Activated CD8-positive, alpha-beta T cell treated with anti-CD3 and anti-CD28 coated beads for 36 hours (primary cell): ENCODE measurements at regions of chr19 and their contacts with region 1.

Region 1: DNA sequence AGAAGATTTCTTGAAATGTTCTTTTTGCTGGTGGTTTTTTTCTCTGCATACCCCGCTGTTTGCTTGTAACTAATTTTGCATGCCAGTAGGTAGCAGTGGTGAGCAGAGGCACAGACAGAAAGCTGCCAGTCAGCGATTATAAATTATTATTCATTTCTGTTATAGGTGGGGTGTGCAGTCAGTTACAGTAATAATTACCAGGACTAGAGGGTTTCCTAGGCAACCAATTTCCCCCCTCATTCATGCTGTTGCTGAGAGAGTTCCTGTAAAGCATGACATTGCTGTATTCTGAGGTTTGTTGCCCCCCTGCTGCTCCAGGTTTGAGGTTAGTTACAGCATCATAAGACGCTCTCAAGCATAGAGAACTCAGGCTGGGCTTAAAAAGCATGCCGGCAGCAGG is 104.5 kb downstream of the URI1 start:
- DNase-seq: peak; percentile 12
- ATAC-seq: peak; percentile 66
- H3K4me3 Mint-ChIP-seq: no peak overlapping the region
- H3K27ac Mint-ChIP-seq: no peak overlapping the region
- H3K4me1 Mint-ChIP-seq: peaks cover 13% of the 10 kb centered on the region
- H3K27me3 Mint-ChIP-seq: no peaks in the 10 kb centered on the region
- CTCF ChIP-seq: peak; percentile 40

Region 2: GRCh38 chr19:30036191-30037129 is 10.1 kb before region 1 on chr19:
- CTCF ChIA-PET with region 1: interaction called, 10 read pairs
- POLR2A ChIA-PET with region 1: no interaction called
- intact Hi-C with region 1: no loop called
- DNase-seq: no peak
- ATAC-seq: no peak
- H3K4me3 Mint-ChIP-seq: no peak overlapping the region
- H3K27ac Mint-ChIP-seq: no peak overlapping the region
- H3K4me1 Mint-ChIP-seq: no peaks in the 10 kb centered on the region
- H3K27me3 Mint-ChIP-seq: no peaks in the 10 kb centered on the region
- CTCF ChIP-seq: no peak

Region 3: DNA sequence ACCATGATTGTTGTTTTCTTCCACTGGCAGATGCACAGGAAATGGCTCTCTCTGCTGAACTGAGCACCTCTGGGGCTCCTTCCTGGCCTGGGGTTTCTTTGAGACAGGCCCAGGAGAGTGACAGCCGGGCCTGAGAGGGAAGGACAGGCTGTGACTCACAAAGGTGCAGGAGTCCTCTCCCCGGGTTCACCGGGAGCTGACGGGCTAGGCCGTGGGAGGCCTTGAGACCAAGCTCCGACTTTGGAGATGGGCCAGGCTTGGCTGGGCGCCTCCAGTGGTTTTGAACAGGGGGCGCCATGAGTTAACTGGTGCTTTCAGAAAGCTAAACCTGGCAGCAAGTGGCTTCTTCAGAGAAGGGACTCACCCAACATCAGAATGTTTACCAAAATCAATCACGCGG is 38.9 kb after region 1 on chr19:
- CTCF ChIA-PET with region 1: no interaction called
- POLR2A ChIA-PET with region 1: no interaction called
- intact Hi-C with region 1: no loop called
- DNase-seq: peak; percentile 20
- ATAC-seq: peak; percentile 51
- H3K4me3 Mint-ChIP-seq: no peak overlapping the region
- H3K27ac Mint-ChIP-seq: no peak overlapping the region
- H3K4me1 Mint-ChIP-seq: no peaks in the 10 kb centered on the region
- H3K27me3 Mint-ChIP-seq: no peaks in the 10 kb centered on the region
- CTCF ChIP-seq: no peak

Region 4: DNA sequence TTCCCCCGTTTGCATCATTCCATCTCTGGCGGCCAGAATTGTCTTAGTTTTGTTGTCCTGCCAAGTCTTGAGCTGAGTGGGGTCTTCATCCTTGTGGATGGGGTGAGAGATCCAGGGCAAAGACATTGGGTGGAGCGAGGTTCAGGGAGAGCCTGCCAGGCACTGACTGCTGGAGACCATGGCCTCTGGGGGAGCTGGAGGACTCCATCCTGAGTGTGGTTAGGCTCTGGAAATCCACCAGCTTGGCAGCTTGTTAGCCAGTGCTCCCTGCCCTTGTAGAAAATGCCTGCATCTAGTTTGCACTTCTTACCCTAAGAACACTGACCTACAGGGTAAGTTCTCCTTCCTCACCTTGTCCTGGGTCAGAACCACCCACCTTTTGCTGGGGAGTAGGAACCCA is 228.5 kb after region 1 on chr19:
- CTCF ChIA-PET with region 1: no interaction called
- POLR2A ChIA-PET with region 1: no interaction called
- intact Hi-C with region 1: no loop called
- DNase-seq: no peak
- ATAC-seq: no peak
- H3K4me3 Mint-ChIP-seq: no peak overlapping the region
- H3K27ac Mint-ChIP-seq: no peak overlapping the region
- H3K4me1 Mint-ChIP-seq: no peaks in the 10 kb centered on the region
- H3K27me3 Mint-ChIP-seq: no peaks in the 10 kb centered on the region
- CTCF ChIP-seq: no peak